ENCODE measurements at regions of chr22 and their contacts with region 1.

Region 1: GRCh38 chr22:17077255-17077654 is 7.5 kb upstream of the IL17RA start:
- DNase-seq: no peak
- ATAC-seq: no peak

Region 2: GRCh38 chr22:16989915-16990314 is 87.3 kb before region 1 on chr22:
- intact Hi-C with region 1: no loop called
- DNase-seq: no peak
- ATAC-seq: no peak

Region 3: DNA sequence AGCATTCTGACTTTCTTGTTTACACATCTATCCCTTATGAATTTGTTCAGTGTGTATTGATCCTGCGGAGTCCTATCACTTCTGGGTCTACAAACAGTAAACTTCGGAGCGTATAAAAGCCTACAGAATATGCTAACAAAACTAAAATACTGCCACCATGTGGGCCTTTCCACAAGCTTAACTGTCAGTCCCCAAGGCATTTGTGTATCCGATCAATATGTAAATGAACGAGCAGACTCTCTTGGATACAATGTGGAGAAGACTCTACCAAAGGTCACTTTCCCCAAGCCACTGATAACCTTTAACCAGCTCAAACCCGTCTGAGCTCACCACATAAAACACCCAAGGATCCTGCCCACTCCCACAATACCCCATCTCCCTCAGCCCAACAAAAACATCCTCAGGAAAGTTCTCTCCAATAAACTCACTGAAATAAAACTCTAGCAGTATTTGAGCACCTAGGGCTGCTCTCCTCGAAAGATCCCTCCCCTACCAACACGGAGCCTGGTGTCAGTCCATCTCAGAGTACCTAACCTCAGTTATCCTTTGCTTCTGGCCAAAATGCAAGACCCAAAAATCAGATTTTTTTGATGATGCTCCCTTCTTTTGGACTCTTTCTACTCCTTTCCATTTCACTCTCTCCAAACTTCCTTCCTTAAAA is 124.2 kb after region 1 on chr22:
- intact Hi-C with region 1: loop called in 1 of 2 experiments (anchors 5 kb)
- DNase-seq: no peak
- ATAC-seq: no peak

Region 4: DNA sequence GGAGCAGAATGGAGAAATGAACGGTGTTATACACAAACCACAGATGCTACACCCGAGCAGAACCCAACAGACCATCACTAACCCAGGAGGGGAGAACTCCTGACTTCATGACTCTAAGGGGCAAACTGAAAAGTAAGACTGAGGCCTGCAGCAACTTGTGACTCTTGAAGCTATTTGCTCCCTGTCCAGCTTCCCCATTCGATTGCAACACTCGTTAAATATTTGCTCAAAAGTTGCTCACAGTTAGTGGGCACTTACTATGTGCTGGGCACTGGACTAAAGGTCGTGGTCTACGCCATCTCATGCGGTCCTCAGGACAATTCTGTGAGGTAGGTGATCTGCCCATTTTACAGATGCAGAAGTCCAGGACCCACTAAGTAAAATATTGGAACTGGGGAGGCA is 151.5 kb after region 1 on chr22:
- intact Hi-C with region 1: no loop called
- DNase-seq: no peak
- ATAC-seq: no peak

Region 5: GRCh38 chr22:17501679-17502285 is 424.5 kb after region 1 on chr22:
- intact Hi-C with region 1: loop called (anchors 5 to 10 kb)
- DNase-seq: no peak
- ATAC-seq: peak; percentile 90